Posterior vena cava (tissue), 2 donors: ENCODE measurements at regions of chr9 and their contacts with region 1.

Region 1: DNA sequence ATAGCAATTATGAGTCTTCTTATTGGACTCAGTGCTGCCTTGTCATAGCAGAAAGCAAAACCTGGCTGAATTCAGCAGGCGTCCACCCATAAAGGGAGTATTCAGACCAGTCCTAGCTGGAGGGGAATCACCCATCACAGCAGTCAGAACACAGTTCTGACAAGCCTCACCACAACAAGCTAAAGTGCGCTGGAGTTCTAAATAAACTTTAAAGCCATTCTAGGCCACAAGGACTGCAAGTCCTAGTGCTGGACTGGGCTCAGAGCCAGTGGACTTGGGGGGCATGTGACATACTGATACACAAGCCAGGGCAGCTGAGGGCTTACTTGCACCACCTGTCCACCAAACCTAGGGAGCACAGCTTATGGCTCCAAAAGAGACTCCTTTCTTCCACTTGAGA is 115.3 kb upstream of the PCSK5 start:
- DNase-seq: no peak

Region 2: GRCh38 chr9:75814667-75815066 is 39.5 kb after region 1 on chr9:
- intact Hi-C with region 1: loop called in 1 of 2 experiments (anchors 5 kb)
- DNase-seq: no peak

Region 3: GRCh38 chr9:76818271-76818670 is 1043.1 kb after region 1 on chr9:
- intact Hi-C with region 1: loop called in 1 of 2 experiments (anchors 5 kb)
- DNase-seq: peak; percentile 91